ENCODE measurements at regions of chr14 and their contacts with region 1.

Region 1: DNA sequence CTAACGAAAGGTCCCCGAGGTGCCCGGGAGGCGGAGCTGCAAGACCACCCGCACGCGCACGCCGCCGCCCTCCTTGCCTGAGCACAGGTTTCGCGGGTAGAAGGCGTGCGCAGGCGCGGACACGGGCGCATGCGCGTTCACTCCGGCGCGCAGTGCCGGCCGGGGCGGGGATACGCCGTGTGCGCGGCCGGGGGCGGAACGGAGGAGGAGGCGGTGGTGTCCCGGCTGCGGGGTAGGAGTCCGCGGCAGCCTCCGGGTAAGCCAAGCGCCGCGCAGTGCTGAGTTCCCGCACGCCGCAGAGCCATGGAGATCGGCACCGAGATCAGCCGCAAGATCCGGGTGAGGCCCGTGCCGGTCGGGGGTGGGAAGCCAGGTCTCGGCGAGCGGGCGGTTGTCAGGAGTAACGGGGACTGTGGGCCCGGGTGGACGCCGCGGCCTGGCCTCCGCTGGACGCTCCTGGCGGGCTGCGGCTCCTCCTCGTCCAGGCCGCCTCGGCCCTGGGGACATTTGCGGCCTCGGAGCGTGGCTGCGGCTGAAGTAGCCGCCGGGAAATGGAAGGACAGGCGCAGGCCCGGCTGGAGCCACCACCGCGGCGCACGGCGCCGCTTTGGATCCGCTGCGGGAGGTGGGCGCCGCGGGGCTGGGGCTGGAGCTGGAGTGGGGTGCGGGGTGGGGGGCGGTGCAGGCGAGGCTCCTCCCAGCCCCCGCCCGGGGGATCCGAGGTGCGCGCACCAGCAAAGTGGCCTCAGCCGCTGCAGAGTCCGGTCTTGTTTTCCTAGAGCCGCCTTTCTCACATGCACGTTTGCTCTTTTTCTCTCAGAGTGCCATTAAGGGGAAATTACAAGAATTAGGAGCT is at the start of gene ZC3H14:
- DNase-seq: peak; percentile 90
- H3K4me3 Mint-ChIP-seq: peak within 1 kb of the TSS; percentile 94
- H3K27ac Mint-ChIP-seq: peak within 1 kb of the TSS; percentile 87
- H3K4me1 Mint-ChIP-seq: peaks cover 28% of the 10 kb centered on the region
- H3K27me3 Mint-ChIP-seq: peaks cover 7% of the 10 kb centered on the region
- total RNA-seq, gene ZC3H14: 43.7 to 45.2 TPM

Region 2: DNA sequence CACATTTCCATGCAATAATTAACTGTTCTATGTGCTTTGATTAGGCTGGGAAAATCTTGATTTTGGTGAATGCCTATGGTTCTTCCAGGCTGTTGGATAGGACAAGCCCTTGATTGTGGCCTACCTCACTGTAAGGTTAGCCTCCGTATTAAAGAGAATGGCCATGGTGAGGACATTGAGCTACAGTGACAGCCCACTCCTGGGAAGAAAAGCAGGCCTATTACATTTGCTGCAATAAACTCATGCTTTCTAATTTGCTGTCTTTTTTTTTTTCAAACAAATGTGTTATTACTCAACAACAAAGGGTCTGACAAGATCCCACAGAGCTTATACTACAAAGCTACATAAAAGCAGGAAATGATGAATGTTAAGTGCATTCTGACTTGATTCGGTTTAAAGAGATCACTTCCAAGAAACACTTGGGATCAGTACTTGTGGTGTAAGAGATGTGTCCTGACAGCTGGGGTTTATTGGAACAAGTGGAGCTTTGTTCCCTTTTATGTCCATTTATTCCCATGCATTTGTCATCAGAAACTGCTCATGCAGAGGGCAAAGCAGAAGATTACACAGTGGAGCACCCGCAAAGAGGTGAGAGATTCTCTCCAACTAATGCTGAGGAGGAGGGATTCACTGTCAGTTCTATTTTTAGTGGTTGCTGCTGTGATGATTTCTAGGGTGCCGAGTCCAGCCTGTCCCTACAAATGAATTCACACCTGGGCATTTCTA is 210.9 kb before region 1 on chr14:
- CTCF ChIA-PET with region 1: no interaction called
- POLR2A ChIA-PET with region 1: no interaction called
- intact Hi-C with region 1: no loop called
- DNase-seq: no peak
- H3K4me3 Mint-ChIP-seq: no peak overlapping the region
- H3K27ac Mint-ChIP-seq: no peak overlapping the region
- H3K4me1 Mint-ChIP-seq: no peaks in the 10 kb centered on the region
- H3K27me3 Mint-ChIP-seq: no peaks in the 10 kb centered on the region

Region 3: DNA sequence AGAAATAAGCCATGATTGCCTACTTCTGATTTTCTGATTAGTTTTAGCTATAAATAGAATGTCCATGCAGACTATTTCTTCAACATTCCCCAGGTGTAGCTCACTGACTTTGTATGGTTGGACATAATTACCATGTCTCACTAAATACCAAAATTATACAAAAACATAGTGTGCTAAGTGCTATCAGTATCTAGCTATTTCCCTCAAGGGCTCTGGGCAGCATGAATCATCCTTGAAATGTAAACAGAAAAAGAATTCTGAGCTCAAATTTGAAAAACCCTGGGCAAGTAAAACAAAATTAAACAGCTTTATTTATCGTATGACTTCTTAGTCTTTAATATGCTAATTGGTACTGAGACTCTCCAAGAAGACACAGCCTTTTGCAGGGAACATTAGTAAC is 94.7 kb before region 1 on chr14:
- CTCF ChIA-PET with region 1: no interaction called
- POLR2A ChIA-PET with region 1: no interaction called
- intact Hi-C with region 1: no loop called
- DNase-seq: no peak
- H3K4me3 Mint-ChIP-seq: no peak overlapping the region
- H3K27ac Mint-ChIP-seq: no peak overlapping the region
- H3K4me1 Mint-ChIP-seq: no peaks in the 10 kb centered on the region
- H3K27me3 Mint-ChIP-seq: no peaks in the 10 kb centered on the region

Region 4: GRCh38 chr14:88492272-88493089 is 70.6 kb before region 1 on chr14:
- CTCF ChIA-PET with region 1: interaction called, 6 read pairs
- POLR2A ChIA-PET with region 1: no interaction called
- intact Hi-C with region 1: loop called (anchors 1 kb)
- DNase-seq: peak; percentile 58
- H3K4me3 Mint-ChIP-seq: no peak overlapping the region
- H3K27ac Mint-ChIP-seq: no peak overlapping the region
- H3K4me1 Mint-ChIP-seq: peaks cover 2% of the 10 kb centered on the region
- H3K27me3 Mint-ChIP-seq: peaks cover 4% of the 10 kb centered on the region

Region 5: DNA sequence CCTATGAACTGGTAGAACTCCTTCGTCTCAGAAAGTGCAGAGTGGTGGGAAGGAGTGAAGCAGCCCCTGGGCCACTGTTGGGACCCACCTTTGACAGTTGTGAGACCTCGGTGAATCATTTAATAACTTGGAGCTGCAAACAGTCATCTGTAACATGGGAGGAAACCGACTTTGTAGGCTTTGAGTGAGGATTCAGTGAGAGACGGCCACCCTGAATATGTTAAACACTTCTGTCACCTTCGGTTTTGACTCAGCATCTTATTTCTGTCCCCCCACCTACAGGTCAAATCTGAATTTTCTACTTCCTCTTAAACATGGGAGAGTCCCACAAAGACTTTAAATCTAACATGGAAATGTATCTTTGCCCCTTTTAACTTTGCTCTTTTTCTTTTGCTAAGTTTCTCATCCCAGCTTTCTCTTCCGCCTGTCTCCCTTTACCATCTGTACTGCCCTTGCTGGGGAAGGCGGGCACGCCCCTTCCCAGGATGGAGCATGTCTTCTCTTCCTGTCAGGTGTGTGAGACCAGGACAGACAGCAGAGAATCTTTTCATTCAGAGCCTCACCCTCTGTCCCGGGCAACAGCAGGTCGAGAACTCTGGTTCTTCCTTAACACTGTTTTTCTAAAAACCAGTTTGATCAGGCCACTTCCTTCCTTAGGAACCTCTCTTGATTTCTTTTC is 36.8 kb after region 1 on chr14:
- CTCF ChIA-PET with region 1: interaction called, 4 read pairs
- POLR2A ChIA-PET with region 1: no interaction called
- intact Hi-C with region 1: loop called (anchors 1 kb)
- DNase-seq: peak; percentile 65
- H3K4me3 Mint-ChIP-seq: peak overlapping the region; percentile 25
- H3K27ac Mint-ChIP-seq: peak overlapping the region; percentile 84
- H3K4me1 Mint-ChIP-seq: peaks cover 40% of the 10 kb centered on the region
- H3K27me3 Mint-ChIP-seq: no peaks in the 10 kb centered on the region

Measured in activated CD4-positive, alpha-beta memory T cell treated with anti-CD3 and anti-CD28 coated beads for 36 hours (primary cell).